Endothelial cell of umbilical vein (primary cell): ENCODE measurements at regions of chr12 and their contacts with region 1.

Region 1: DNA sequence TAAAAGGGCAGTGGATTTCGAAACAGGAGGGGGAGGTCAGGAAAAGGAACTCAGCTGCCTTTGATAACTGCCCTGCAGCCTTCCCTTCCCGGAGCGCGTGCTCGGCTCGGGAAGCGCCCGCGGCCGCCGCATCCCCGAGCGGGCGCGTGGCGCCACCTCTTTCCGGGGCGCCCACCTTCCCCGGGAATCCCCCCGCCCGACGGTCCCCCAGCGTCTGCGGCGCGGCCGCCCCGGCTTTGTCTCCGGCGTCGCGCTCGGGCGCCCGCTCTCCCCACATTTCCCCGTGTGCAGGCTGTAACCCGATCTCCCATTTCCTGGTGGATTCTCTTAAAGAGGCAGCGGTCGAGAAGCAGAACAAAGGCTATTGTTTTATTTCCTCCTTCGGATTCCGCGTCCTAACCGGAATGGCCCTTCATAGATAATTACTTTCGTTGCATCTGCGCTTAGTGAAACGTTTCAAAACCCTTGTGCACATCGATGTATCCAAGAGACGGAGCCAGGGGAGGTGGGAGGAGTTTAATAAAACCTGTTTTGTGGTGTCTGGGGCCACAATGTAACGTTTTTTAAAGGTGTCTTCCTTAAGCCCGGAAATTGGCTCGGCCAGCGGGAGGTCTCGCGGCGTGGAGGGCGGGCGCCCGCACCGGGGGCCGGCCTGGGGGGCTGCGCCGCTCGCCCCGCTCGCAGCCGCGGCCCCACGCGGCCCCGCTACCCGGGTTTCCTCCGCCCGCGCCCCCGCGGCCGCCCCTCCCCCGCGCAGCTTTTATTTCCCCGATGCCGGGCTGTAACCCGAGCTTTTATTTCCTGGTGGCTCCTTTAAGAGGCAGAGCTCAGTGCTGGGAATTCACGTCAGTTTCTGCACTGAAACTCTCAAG is at the start of gene ETV6:
- DNase-seq: peak; percentile 89
- H3K4me3 ChIP-seq: peak within 1 kb of the TSS; percentile 91 to 100 (median 92)
- H3K27ac ChIP-seq: peak within 1 kb of the TSS; percentile 100
- H3K4me1 ChIP-seq: peaks cover 17% of the 10 kb centered on the region
- H3K27me3 ChIP-seq: no peaks in the 10 kb centered on the region
- CTCF ChIP-seq: no peak
- POLR2A ChIP-seq: peak; percentile 71
- total RNA-seq, gene ETV6: 56.1 and 57.1 TPM in 2 replicates

Region 2: GRCh38 chr12:11307143-11307542 is 341.9 kb before region 1 on chr12:
- CTCF ChIA-PET with region 1: no interaction called
- POLR2A ChIA-PET with region 1: no interaction called
- dilution Hi-C with region 1: no loop called
- intact Hi-C with region 1: no loop called
- DNase-seq: no peak
- H3K4me3 ChIP-seq: no peak overlapping the region
- H3K27ac ChIP-seq: no peak overlapping the region
- H3K4me1 ChIP-seq: no peaks in the 10 kb centered on the region
- H3K27me3 ChIP-seq: peaks cover 4 to 16% of the 10 kb centered on the region in 2 experiments
- CTCF ChIP-seq: no peak
- POLR2A ChIP-seq: no peak

Region 3: GRCh38 chr12:11482955-11483354 is 166.1 kb before region 1 on chr12:
- CTCF ChIA-PET with region 1: no interaction called
- POLR2A ChIA-PET with region 1: no interaction called
- dilution Hi-C with region 1: no loop called
- intact Hi-C with region 1: no loop called
- DNase-seq: peak; percentile 88
- H3K4me3 ChIP-seq: no peak overlapping the region
- H3K27ac ChIP-seq: peak overlapping the region; percentile 69
- H3K4me1 ChIP-seq: peaks cover 17% of the 10 kb centered on the region
- H3K27me3 ChIP-seq: peaks cover 0 to under 1% of the 10 kb centered on the region in 2 experiments
- CTCF ChIP-seq: no peak
- POLR2A ChIP-seq: no peak

Region 4: GRCh38 chr12:11697670-11698387 is 48.8 kb after region 1 on chr12:
- CTCF ChIA-PET with region 1: no interaction called
- POLR2A ChIA-PET with region 1: no interaction called
- dilution Hi-C with region 1: no loop called
- intact Hi-C with region 1: loop called (anchors 1 kb)
- DNase-seq: peak; percentile 67
- H3K4me3 ChIP-seq: no peak overlapping the region
- H3K27ac ChIP-seq: peak overlapping the region; percentile 39
- H3K4me1 ChIP-seq: peaks cover 24% of the 10 kb centered on the region
- H3K27me3 ChIP-seq: no peaks in the 10 kb centered on the region
- CTCF ChIP-seq: no peak
- POLR2A ChIP-seq: no peak

Region 5: DNA sequence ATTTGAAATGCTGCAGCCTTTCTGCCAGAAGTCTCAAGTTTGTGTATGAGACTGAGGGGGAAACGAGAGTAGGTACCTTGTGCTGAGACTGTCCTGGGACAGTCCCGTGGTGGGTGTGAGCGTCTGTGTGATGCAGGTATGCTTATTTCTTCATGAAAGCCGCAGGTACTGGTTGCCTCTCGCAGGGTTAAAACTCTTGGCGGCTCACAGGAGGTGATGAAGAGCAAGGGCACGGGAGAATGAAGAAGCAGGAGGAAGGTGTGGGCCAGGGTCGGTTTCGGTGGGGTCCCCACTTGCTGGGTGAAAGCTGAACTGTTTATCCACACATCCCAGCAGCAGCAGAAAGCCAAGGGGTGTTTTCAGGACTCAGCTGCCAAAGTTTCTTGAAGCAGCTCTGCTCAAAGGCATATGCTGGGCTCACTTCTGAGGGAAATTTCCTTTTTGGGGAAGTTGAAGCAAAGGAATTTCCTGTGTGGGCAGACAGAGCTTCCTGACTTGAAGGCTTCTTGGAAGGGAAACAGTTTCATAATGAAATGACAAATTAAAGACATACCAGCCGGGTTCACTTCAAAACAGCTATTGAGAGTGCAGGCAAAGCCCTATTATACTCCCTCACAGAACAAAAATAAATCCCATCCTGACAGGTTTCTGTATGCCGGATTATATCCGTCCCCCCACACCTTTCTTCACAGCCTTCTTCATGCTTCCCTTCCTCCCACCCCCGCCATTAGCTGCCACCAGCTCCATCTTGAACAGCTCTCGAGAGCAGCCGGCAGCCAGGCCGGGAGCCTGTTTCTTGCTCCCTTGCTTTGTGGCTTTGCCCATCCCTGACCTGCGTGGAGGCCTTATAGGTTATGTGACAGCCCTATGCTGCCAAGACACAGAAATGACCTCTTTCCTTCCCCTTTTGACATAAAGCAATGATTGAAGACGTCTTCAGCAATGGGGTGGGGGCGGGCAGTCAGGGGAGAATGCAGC is 117.0 kb after region 1 on chr12:
- CTCF ChIA-PET with region 1: no interaction called
- POLR2A ChIA-PET with region 1: no interaction called
- dilution Hi-C with region 1: no loop called
- intact Hi-C with region 1: loop called (anchors 1 kb)
- DNase-seq: peak; percentile 78
- H3K4me3 ChIP-seq: no peak overlapping the region
- H3K27ac ChIP-seq: peak overlapping the region; percentile 85
- H3K4me1 ChIP-seq: peaks cover 41% of the 10 kb centered on the region
- H3K27me3 ChIP-seq: no peaks in the 10 kb centered on the region
- CTCF ChIP-seq: no peak
- POLR2A ChIP-seq: peak; percentile 53

Region 6: DNA sequence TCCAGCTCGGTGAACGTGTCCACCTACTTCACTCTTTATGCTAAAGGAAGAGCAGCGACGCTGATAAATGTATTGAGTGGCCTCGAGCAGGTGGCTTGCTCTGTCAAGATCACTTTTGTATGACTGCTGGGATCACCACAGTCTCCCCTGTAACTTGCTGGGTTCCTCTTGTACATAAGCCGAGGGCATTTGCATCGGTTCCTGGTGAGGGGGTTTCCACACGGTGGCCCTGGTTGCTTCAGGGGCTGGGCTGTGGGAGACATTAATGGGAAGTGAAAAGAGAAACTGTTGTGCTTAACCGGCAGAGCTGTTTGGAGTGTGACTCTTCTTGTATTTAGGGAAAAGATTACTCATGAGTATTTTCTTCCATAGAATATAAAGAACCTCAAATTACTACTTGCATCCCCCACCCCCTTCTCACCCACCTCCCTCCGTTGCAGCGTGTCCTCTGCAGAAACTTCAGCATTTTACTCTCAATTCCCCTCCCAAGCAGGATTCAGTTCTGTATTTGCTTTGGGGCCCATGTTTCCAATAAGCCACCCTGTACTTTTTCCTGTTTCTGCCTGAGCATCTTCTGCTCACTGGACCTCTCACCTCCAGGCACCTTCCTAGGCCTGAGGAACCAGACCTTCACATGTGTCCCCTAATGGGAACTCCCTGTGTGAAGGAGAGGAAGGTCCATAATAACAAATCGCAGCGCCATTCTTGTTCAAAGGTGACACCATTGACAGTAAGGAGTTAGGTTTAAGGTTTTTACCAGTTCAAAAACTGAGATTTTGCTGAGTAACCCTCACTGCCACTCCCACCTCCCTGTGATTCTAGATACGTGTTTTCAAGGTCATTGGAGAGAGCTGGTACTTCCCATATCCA is 187.4 kb after region 1 on chr12:
- CTCF ChIA-PET with region 1: no interaction called
- POLR2A ChIA-PET with region 1: no interaction called
- dilution Hi-C with region 1: no loop called
- intact Hi-C with region 1: loop called (anchors 1 kb)
- DNase-seq: no peak
- H3K4me3 ChIP-seq: no peak overlapping the region
- H3K27ac ChIP-seq: no peak overlapping the region
- H3K4me1 ChIP-seq: peaks cover 49% of the 10 kb centered on the region
- H3K27me3 ChIP-seq: no peaks in the 10 kb centered on the region
- CTCF ChIP-seq: no peak
- POLR2A ChIP-seq: no peak

Region 7: DNA sequence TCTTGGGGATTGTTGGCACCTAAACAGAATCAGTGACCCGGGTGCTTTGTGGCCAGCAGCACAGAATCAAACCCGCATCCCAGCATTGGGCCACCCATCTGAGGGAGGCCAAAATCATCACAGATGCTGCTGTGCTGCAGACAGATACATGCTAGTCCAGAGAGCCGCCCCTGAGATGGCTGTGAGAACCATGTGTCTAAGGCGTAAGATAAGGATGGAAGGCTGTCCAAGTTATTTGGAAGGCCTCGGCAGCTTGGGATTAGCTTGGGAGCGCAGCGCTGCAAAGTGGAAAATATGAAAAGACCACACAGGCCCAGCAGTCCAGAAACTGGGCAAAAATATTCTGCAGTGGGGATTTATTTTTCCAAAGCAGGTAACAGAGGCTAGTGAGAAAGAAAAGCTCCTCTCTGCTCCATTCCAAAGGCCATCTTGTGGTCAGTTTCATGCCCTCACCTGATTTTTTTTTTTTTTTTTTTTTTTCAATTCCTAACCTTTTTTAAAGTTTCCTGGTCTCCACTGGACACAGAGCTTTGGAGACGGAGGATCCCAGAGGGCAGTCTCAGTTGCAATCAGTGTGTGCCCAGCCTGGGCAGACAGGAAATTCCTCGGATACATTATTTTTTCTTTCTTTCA is 242.8 kb after region 1 on chr12:
- CTCF ChIA-PET with region 1: interaction called, 10 read pairs
- POLR2A ChIA-PET with region 1: no interaction called
- dilution Hi-C with region 1: no loop called
- intact Hi-C with region 1: loop called (anchors 1 kb)
- DNase-seq: peak; percentile 53
- H3K4me3 ChIP-seq: no peak overlapping the region
- H3K27ac ChIP-seq: no peak overlapping the region
- H3K4me1 ChIP-seq: peaks cover 13% of the 10 kb centered on the region
- H3K27me3 ChIP-seq: no peaks in the 10 kb centered on the region
- CTCF ChIP-seq: peak in 1 of 2 donors; percentile 37
- POLR2A ChIP-seq: no peak

Region 8: GRCh38 chr12:12334367-12335040 is 685.4 kb after region 1 on chr12:
- CTCF ChIA-PET with region 1: no interaction called
- POLR2A ChIA-PET with region 1: no interaction called
- dilution Hi-C with region 1: no loop called
- intact Hi-C with region 1: loop called (anchors 5 kb)
- DNase-seq: peak; percentile 67
- H3K4me3 ChIP-seq: no peak overlapping the region
- H3K27ac ChIP-seq: no peak overlapping the region
- H3K4me1 ChIP-seq: peaks cover 44% of the 10 kb centered on the region
- H3K27me3 ChIP-seq: no peaks in the 10 kb centered on the region
- CTCF ChIP-seq: peak; percentile 76 to 83
- POLR2A ChIP-seq: peak; percentile 40